ENCODE measurements at regions of chr6 and their contacts with region 1.

Region 1: GRCh38 chr6:30326526-30327260 is at the start of gene TRIM39:
- DNase-seq: peak; percentile 93
- ATAC-seq: peak; percentile 60
- H3K4me3 Mint-ChIP-seq: peak within 1 kb of the TSS; percentile 86
- H3K27ac Mint-ChIP-seq: peak within 1 kb of the TSS; percentile 97
- H3K4me1 Mint-ChIP-seq: peaks cover 54% of the 10 kb centered on the region
- H3K27me3 Mint-ChIP-seq: no peaks in the 10 kb centered on the region
- total RNA-seq, gene TRIM39: 16.5 to 17.5 TPM

Region 2: DNA sequence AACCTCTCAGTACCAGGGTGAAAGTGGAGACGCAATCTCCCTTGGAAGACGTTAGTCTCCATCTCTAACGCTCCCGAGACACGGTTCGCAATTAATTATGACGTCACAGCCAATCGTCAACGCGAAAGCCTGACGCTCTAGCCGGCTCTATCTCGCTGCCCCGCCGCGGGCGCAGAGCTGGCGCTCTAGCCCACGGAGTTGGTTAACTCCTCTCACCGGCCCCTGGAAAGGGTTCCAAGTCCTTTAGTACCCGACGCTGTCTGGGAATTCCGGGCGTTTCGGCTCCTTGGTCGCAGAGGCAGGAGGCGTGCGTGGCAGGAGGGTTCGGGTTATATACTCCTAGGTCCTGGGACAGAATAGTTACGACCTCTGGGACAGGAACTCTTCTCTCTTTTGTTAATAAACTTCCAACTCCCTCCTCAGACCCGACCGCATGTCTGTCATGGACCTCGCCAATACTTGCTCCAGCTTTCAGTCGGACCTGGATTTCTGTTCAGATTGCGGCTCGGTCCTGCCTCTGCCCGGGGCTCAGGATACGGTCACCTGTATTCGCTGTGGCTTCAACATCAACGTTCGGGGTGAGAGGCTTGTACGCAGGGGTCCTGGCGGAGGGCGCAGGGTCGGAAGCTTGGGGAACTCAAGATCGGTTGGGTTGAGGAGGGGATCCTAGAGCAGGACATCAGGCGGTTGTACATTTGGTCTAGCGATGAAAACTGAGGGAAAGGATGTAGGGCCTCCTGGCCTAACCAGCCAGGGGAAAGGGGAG is 265.4 kb before region 1 on chr6 and contains the start of gene POLR1H:
- CTCF ChIA-PET with region 1: no interaction called
- POLR2A ChIA-PET with region 1: interaction called, 6 read pairs
- intact Hi-C with region 1: loop called (anchors 1 to 5 kb)
- DNase-seq: peak; percentile 92
- ATAC-seq: peak; percentile 88
- H3K4me3 Mint-ChIP-seq: peak within 1 kb of the TSS; percentile 94
- H3K27ac Mint-ChIP-seq: peak within 1 kb of the TSS; percentile 98
- H3K4me1 Mint-ChIP-seq: peaks cover 43% of the 10 kb centered on the region
- H3K27me3 Mint-ChIP-seq: no peaks in the 10 kb centered on the region
- total RNA-seq, gene POLR1H: 38.2 to 65.0 TPM

Region 3: GRCh38 chr6:30212865-30213666 is 113.6 kb before region 1 on chr6 and contains the start of gene TRIM26:
- CTCF ChIA-PET with region 1: interaction called, 3 read pairs
- POLR2A ChIA-PET with region 1: interaction called, 6 read pairs
- intact Hi-C with region 1: loop called (anchors 1 kb)
- DNase-seq: peak; percentile 98
- ATAC-seq: peak; percentile 90
- H3K4me3 Mint-ChIP-seq: peak within 1 kb of the TSS; percentile 89
- H3K27ac Mint-ChIP-seq: peak within 1 kb of the TSS; percentile 99
- H3K4me1 Mint-ChIP-seq: peaks cover 50% of the 10 kb centered on the region
- H3K27me3 Mint-ChIP-seq: no peaks in the 10 kb centered on the region
- total RNA-seq, gene TRIM26: 48.4 to 60.4 TPM

Region 4: GRCh38 chr6:30283761-30284160 is 42.9 kb before region 1 on chr6:
- CTCF ChIA-PET with region 1: no interaction called
- POLR2A ChIA-PET with region 1: no interaction called
- intact Hi-C with region 1: no loop called
- DNase-seq: no peak
- ATAC-seq: no peak
- H3K4me3 Mint-ChIP-seq: no peak overlapping the region
- H3K27ac Mint-ChIP-seq: no peak overlapping the region
- H3K4me1 Mint-ChIP-seq: no peaks in the 10 kb centered on the region
- H3K27me3 Mint-ChIP-seq: no peaks in the 10 kb centered on the region

Region 5: DNA sequence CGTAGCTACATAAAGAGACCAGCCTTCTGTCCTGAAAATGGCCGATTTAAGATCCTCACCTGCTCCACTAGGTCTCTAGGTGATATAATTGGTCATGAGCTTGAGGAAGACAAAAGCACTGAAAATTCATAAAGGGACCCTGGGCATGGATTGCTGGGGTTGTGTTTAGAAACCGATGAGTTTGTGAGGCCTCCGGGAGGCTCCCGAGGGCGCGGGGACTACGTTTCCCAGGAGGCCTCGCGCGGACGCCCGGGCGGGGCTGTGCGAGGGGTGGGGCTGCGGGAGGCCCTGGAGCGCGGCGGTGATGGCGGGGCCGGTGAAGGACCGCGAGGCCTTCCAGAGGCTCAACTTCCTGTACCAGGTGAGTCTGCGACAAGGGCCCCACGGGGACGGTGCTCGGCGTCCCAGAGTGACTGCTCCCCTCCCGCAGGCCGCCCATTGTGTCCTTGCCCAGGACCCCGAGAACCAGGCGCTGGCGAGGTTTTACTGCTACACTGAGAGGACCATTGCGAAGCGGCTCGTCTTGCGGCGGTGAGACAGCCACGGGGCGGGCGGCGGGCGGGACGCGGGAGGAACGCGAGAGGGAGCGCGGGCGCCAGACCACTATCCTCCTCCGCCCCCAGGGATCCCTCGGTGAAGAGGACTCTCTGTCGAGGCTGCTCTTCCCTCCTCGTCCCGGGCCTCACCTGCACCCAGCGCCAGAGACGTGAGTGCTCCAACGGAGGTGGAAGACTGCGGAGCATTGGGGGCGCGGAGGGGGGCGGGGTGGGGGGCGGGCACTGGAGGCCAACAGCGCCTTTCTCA is 18.4 kb after region 1 on chr6 and contains the start of gene RPP21:
- CTCF ChIA-PET with region 1: interaction called, 3 read pairs
- POLR2A ChIA-PET with region 1: interaction called, 6 read pairs
- intact Hi-C with region 1: loop called (anchors 1 kb)
- DNase-seq: peak; percentile 94
- ATAC-seq: peak; percentile 96
- H3K4me3 Mint-ChIP-seq: peak within 1 kb of the TSS; percentile 85
- H3K27ac Mint-ChIP-seq: peak within 1 kb of the TSS; percentile 84
- H3K4me1 Mint-ChIP-seq: peaks cover 41% of the 10 kb centered on the region
- H3K27me3 Mint-ChIP-seq: peaks cover 2% of the 10 kb centered on the region
- total RNA-seq, gene RPP21: 32.6 to 38.1 TPM

Region 6: GRCh38 chr6:30686908-30687658 is 360.4 kb after region 1 on chr6:
- CTCF ChIA-PET with region 1: no interaction called
- POLR2A ChIA-PET with region 1: no interaction called
- intact Hi-C with region 1: loop called in 1 of 2 experiments (anchors 10 kb)
- DNase-seq: peak; percentile 90
- ATAC-seq: peak; percentile 20
- H3K4me3 Mint-ChIP-seq: peak overlapping the region; percentile 100
- H3K27ac Mint-ChIP-seq: peak overlapping the region; percentile 89
- H3K4me1 Mint-ChIP-seq: peaks cover 42% of the 10 kb centered on the region
- H3K27me3 Mint-ChIP-seq: no peaks in the 10 kb centered on the region

Region 7: DNA sequence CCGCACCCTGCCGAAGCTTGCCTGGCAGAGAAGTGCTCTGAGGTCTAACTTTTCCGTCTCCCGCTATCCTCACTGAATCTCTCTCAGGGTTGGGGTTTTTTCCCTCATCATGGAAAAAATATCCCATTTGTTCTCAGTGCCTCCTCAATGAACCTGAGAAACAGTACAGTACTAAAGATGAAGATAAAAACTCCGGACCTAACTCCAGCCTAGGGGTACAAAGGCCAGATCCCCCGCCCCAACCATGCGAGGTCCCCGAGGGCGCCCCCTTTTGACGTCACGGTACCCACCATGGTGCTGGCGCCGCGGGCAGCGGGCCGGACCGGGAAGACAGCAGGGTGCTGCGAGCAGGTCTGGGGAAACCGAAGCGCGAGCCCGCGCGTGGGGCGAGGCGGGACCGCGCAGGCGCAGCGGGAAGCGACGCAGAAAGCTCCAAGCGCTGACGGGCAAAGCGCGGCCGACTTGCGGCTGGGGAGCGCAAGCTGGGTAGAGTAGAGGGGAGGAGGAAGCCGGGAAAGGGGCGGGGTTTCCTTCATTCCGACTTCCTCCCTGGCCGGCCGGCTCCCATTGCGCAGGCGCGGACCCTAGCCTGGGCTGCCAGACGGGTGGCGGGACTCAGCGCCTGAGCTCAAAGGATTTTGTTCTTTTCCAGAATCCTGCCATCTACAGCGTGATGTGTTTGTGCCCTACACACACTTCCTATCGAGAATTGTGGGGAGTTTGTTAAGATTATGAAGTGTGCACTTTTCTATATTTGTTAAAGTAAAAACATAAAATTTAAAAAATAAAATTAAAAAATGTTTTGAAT is 1480.0 kb after region 1 on chr6 and contains the start of gene LSM2:
- CTCF ChIA-PET with region 1: no interaction called
- POLR2A ChIA-PET with region 1: no interaction called
- intact Hi-C with region 1: loop called in 1 of 2 experiments (anchors 10 kb)
- DNase-seq: peak; percentile 99
- ATAC-seq: peak; percentile 99
- H3K4me3 Mint-ChIP-seq: peak within 1 kb of the TSS; percentile 91
- H3K27ac Mint-ChIP-seq: peak within 1 kb of the TSS; percentile 94
- H3K4me1 Mint-ChIP-seq: peaks cover 22% of the 10 kb centered on the region
- H3K27me3 Mint-ChIP-seq: no peaks in the 10 kb centered on the region
- total RNA-seq, gene LSM2: 112 to 124 TPM

Measured in activated CD4-positive, alpha-beta T cell treated with anti-CD3 and anti-CD28 coated beads for 36 hours (primary cell).